ENCODE measurements at regions of chr20 and their contacts with region 1.

Region 1: DNA sequence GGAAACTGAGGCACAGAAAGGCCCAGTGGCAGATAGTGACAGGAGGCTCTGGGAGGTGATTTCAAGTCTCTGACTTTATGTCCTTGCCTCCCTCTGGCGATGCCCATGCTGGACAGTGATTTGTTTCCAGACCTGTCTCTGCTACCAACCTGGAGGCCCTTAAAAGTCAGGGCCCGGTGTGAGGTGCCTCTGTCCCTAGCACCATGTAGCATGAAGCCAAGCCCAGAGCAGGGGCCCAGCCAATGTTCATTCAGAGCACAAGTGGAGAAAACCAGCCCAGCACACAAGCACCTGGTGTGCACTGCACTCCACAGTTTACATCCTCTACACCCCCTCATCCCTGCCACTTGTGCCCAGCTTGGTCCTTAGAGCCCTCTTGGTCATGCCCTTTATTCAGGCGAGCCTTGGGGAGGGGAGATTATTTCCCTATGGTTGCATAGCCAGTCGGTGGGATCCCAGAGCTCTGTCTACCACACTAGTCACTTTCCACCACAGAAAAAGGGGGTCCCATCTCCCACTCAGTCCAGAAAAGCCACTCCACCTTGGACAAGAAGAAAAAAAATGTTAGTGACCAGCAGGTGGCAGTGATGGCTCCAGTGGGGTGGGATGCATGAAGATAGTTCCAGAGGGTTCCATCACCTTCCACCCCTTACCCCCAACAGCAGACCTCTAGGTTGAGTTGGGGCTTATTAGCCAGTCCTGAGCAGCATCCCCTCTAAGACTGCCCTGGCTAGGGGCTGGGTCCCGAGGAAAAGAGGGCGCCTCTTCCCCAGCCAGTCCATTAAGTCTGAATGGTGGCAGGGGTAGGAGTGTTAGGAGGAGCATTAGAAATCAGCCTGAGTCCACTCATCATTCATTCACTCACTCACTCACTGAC is 30.9 kb downstream of the KIAA1755 start:
- DNase-seq: no peak
- ATAC-seq: peak; percentile 62
- H3K4me3 ChIP-seq: no peak overlapping the region
- H3K27ac ChIP-seq: no peak overlapping the region
- H3K4me1 ChIP-seq: no peaks in the 10 kb centered on the region
- H3K27me3 ChIP-seq: no peaks in the 10 kb centered on the region
- CTCF ChIP-seq: peak; percentile 51 to 57 (median 52); a peak in 5 of 6 replicates
- POLR2A ChIP-seq: no peak
- RAD21 ChIP-seq: peak; percentile 56

Region 2: DNA sequence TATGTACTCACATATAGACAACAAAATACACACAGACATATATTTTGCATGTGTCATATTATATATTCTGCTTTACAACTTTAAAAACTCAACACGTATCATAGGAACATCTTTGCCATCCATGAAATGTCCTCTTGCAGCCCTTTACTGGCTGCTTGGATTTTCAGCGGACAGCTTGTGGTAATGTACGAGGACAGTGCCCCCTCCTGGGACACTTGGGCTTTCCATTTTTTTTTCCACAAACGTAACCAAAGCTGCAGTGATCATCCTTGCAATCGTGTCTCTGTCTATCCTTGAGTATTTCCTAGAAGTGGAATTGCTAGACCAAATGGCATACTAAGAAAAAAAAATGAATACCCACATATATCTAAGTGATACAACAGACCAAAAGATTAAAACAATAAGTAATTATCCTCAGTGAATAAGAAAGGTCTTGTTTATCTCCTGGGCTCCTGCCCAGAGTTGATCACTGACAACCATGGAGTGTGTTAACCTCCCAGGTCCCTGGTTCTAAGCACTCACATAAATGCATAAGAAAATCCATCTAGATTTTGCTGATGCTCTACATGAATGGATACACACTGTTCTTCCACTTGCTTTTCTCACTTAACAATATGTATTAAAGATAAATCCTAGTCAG is 92.5 kb after region 1 on chr20:
- CTCF ChIA-PET with region 1: interaction called, 3 read pairs
- POLR2A ChIA-PET with region 1: no interaction called
- RAD21 ChIA-PET with region 1: no interaction called
- intact Hi-C with region 1: loop called (anchors 1 kb)
- DNase-seq: peak; percentile 26
- ATAC-seq: peak; percentile 86
- H3K4me3 ChIP-seq: no peak overlapping the region
- H3K27ac ChIP-seq: no peak overlapping the region
- H3K4me1 ChIP-seq: no peaks in the 10 kb centered on the region
- H3K27me3 ChIP-seq: peaks cover 6% of the 10 kb centered on the region
- CTCF ChIP-seq: peak; percentile 56 to 78 (median 56); a peak in 5 of 6 replicates
- POLR2A ChIP-seq: no peak
- RAD21 ChIP-seq: peak; percentile 60

Region 3: GRCh38 chr20:38412877-38413577 is 183.4 kb after region 1 on chr20:
- CTCF ChIA-PET with region 1: interaction called, 7 read pairs
- POLR2A ChIA-PET with region 1: no interaction called
- RAD21 ChIA-PET with region 1: no interaction called
- intact Hi-C with region 1: loop called (anchors 1 kb)
- DNase-seq: no peak
- ATAC-seq: no peak
- H3K4me3 ChIP-seq: no peak overlapping the region
- H3K27ac ChIP-seq: no peak overlapping the region
- H3K4me1 ChIP-seq: no peaks in the 10 kb centered on the region; a peak in 1 of 4 replicates
- H3K27me3 ChIP-seq: no peaks in the 10 kb centered on the region
- CTCF ChIP-seq: no peak
- POLR2A ChIP-seq: no peak
- RAD21 ChIP-seq: no peak

Region 4: GRCh38 chr20:38559764-38560163 is 330.1 kb after region 1 on chr20:
- CTCF ChIA-PET with region 1: no interaction called
- POLR2A ChIA-PET with region 1: no interaction called
- RAD21 ChIA-PET with region 1: no interaction called
- intact Hi-C with region 1: no loop called
- DNase-seq: no peak
- ATAC-seq: no peak
- H3K4me3 ChIP-seq: no peak overlapping the region
- H3K27ac ChIP-seq: no peak overlapping the region
- H3K4me1 ChIP-seq: no peaks in the 10 kb centered on the region
- H3K27me3 ChIP-seq: no peaks in the 10 kb centered on the region
- CTCF ChIP-seq: no peak
- POLR2A ChIP-seq: no peak
- RAD21 ChIP-seq: no peak

Measured in HCT116 (cell line).